PC-9 (cell line): ENCODE measurements at regions of chr11 and their contacts with region 1.

Region 1: DNA sequence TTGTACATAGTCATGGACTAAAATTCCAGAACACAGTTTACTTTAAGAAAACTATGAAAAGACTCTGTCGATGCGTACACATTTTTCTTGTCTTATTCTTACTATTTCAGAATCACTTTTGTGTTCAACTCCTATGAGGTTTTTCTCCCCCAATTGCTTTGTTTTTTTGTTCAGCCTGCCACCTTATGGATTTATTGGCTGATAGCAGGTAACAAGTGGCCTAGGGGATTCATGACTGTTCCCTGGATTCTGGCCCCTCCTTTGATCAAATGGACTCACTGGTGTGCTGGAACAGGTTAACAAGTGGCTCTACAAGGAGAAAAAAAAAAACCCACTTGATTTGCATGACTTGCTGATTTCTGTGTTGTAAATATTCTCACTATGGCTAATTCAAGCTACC is 10.6 kb downstream of the MMP20 start:
- DNase-seq: no peak
- H3K4me3 ChIP-seq: no peak overlapping the region
- H3K27ac ChIP-seq: no peak overlapping the region
- H3K4me1 ChIP-seq: no peaks in the 10 kb centered on the region
- H3K27me3 ChIP-seq: no peaks in the 10 kb centered on the region
- CTCF ChIP-seq: peak; percentile 50; the same call in 1 of the 2 replicates

Region 2: GRCh38 chr11:101848262-101848661 is 766.2 kb before region 1 on chr11:
- CTCF ChIA-PET with region 1: no interaction called
- POLR2A ChIA-PET with region 1: no interaction called
- intact Hi-C with region 1: loop called (anchors 2 kb)
- DNase-seq: no peak
- H3K4me3 ChIP-seq: no peak overlapping the region
- H3K27ac ChIP-seq: no peak overlapping the region
- H3K4me1 ChIP-seq: no peaks in the 10 kb centered on the region; the same call in 1 of the 2 replicates
- H3K27me3 ChIP-seq: no peaks in the 10 kb centered on the region
- CTCF ChIP-seq: peak; percentile 87

Region 3: DNA sequence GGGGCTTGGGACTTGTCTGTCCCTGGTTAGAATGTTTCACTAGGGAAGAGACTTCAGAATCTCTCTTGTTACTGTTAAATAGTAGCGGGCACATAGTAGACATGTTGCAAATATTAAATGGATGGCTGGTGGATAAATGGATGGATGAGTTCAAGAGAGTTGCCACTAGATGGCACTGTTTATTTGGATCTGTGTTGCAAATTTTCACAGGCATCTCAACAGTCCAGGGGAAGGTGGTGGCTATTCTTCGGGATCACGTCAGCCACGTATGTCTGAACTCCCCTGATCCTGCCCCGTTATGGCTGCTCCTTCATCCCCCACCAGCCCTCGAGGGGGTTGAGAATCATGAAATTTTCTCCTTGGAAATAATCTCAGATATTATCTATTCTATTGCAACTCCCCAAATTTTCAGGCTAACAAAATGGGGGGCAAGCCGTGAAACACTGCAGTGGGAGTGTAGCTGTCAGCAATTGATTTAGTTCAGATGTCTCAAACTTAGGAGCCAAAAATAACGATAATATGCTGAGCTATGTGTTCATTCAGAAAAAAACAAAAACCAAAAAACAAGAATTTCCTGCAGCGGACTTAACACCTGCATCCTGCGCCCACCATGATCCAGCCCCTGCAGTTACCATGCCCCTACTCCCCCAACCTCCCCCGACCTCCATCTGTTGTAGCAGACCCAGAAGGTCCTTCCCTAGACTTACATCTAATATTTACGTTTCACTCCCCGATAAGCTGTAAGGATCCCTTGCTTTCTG is 326.3 kb before region 1 on chr11:
- CTCF ChIA-PET with region 1: no interaction called
- POLR2A ChIA-PET with region 1: no interaction called
- intact Hi-C with region 1: loop called (anchors 1 kb)
- DNase-seq: peak; percentile 38 to 67
- H3K4me3 ChIP-seq: no peak overlapping the region
- H3K27ac ChIP-seq: no peak overlapping the region
- H3K4me1 ChIP-seq: peaks cover 24% of the 10 kb centered on the region
- H3K27me3 ChIP-seq: no peaks in the 10 kb centered on the region
- CTCF ChIP-seq: peak; percentile 92

Region 4: DNA sequence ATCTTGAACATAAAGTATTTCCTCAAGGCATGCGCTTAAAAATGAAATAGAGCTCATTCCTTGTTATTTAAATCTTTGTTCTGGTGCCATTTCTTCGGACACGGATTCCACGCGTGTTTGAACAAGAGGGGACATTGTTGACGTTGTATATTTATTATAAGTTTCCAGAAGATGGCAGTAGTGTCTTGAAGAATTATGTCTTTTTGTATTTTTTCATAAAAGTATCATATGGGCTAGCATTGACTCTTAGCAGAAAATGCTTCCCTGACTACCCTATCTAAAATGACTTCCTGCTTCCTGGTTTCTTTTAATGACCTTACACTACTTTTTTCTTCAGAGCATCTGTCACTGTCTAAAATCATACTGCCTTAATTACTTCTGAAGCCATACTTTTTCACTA is 247.1 kb before region 1 on chr11:
- CTCF ChIA-PET with region 1: interaction called, 3 read pairs
- POLR2A ChIA-PET with region 1: no interaction called
- intact Hi-C with region 1: loop called (anchors 2 kb)
- DNase-seq: peak in 1 of 2 experiments; percentile 63
- H3K4me3 ChIP-seq: no peak overlapping the region
- H3K27ac ChIP-seq: no peak overlapping the region
- H3K4me1 ChIP-seq: no peaks in the 10 kb centered on the region
- H3K27me3 ChIP-seq: no peaks in the 10 kb centered on the region
- CTCF ChIP-seq: peak; percentile 67

Region 5: GRCh38 chr11:102495161-102496042 is 119.1 kb before region 1 on chr11:
- CTCF ChIA-PET with region 1: interaction called, 6 read pairs
- POLR2A ChIA-PET with region 1: no interaction called
- intact Hi-C with region 1: loop called (anchors 1 kb)
- DNase-seq: peak; percentile 14 to 84
- H3K4me3 ChIP-seq: no peak overlapping the region
- H3K27ac ChIP-seq: no peak overlapping the region
- H3K4me1 ChIP-seq: peaks cover 18% of the 10 kb centered on the region
- H3K27me3 ChIP-seq: no peaks in the 10 kb centered on the region
- CTCF ChIP-seq: peak; percentile 91

Region 6: GRCh38 chr11:102653744-102654291 is 39.3 kb after region 1 on chr11:
- CTCF ChIA-PET with region 1: no interaction called
- POLR2A ChIA-PET with region 1: no interaction called
- intact Hi-C with region 1: no loop called
- DNase-seq: no peak
- H3K4me3 ChIP-seq: no peak overlapping the region
- H3K27ac ChIP-seq: no peak overlapping the region
- H3K4me1 ChIP-seq: no peaks in the 10 kb centered on the region
- H3K27me3 ChIP-seq: no peaks in the 10 kb centered on the region
- CTCF ChIP-seq: no peak

Region 7: DNA sequence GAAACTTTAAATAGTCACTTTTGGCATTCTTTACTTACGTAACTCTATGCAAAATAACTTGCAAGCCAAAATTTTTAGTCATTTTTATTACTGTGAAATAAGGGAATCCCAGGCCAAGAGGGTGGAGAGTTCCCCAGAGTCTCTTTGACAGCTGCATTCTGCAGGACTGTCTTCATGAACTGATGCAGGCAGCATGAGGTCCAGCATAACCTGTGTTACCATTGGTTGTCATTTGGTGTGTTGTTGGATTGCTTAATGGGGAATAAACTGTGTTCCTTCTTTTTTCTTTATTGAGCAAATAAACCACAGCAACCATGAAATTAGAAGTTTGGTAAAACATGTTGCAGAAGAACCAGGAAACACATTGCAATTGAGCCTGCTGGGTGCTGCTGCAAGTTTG is 66.5 kb after region 1 on chr11:
- CTCF ChIA-PET with region 1: no interaction called
- POLR2A ChIA-PET with region 1: no interaction called
- intact Hi-C with region 1: no loop called
- DNase-seq: no peak
- H3K4me3 ChIP-seq: no peak overlapping the region
- H3K27ac ChIP-seq: no peak overlapping the region
- H3K4me1 ChIP-seq: no peaks in the 10 kb centered on the region
- H3K27me3 ChIP-seq: no peaks in the 10 kb centered on the region
- CTCF ChIP-seq: no peak